Activated B cell treated with CpG ODN at 0.5 μM for 24 hours (primary cell): ENCODE measurements at regions of chr5 and their contacts with region 1.

Region 1: DNA sequence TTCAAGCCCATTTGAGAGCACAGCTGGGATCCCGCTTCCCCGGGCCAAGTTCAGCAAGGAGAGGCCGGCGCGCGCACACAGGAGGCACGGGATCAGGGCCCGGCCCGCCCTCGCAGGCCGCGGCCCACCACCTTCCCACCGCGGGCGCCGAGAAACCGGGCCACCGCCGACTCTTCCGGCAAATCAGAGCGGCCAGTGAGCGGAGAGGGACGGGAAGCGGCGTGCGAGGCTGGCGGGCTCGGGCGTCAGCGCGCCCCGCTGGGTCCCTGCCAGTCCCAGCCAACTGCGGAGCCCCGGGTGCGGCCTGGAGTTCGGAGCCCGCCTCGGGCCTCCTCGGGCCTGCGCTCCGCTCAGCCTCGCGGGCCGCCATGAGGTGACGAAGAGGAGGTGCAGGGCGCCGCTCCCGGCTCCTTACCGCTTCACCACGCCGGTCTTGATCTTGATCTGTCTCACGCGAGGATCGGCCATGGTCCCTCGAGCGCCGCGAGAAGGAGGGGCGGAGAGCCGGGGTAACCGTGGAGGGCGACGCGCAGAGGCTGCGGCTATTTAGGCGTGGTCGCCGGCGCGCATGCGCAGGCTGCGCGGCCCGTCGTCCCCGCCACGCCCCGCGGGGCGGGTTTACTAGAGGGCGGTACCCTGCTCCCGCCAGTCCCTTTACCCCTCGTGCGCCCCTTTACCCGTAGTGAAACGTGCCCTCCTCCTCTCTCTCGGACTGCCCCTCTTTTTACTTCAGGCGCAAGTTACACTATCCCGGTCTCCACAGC is at the start of gene TBCA:
- DNase-seq: peak; percentile 96
- ATAC-seq: peak; percentile 89
- H3K4me3 Mint-ChIP-seq: peak within 1 kb of the TSS; percentile 95
- H3K27ac Mint-ChIP-seq: peak within 1 kb of the TSS; percentile 93
- H3K4me1 Mint-ChIP-seq: peaks cover 44% of the 10 kb centered on the region
- H3K27me3 Mint-ChIP-seq: no peaks in the 10 kb centered on the region
- CTCF ChIP-seq: no peak
- total RNA-seq, gene TBCA: 113 and 128 TPM in 2 replicates

Region 2: GRCh38 chr5:77030097-77031071 is 745.6 kb before region 1 on chr5 and contains the start of gene AGGF1:
- CTCF ChIA-PET with region 1: no interaction called
- POLR2A ChIA-PET with region 1: no interaction called
- intact Hi-C with region 1: loop called (anchors 10 kb)
- DNase-seq: peak; percentile 79
- ATAC-seq: peak; percentile 99
- H3K4me3 Mint-ChIP-seq: peak within 1 kb of the TSS; percentile 99
- H3K27ac Mint-ChIP-seq: peak within 1 kb of the TSS; percentile 89
- H3K4me1 Mint-ChIP-seq: peaks cover 28% of the 10 kb centered on the region
- H3K27me3 Mint-ChIP-seq: peaks cover 8% of the 10 kb centered on the region
- CTCF ChIP-seq: no peak
- total RNA-seq, gene AGGF1: 22.2 and 26.5 TPM in 2 replicates

Region 3: GRCh38 chr5:77550406-77550805 is 225.6 kb before region 1 on chr5:
- CTCF ChIA-PET with region 1: no interaction called
- POLR2A ChIA-PET with region 1: no interaction called
- intact Hi-C with region 1: no loop called
- DNase-seq: no peak
- ATAC-seq: no peak
- H3K4me3 Mint-ChIP-seq: no peak overlapping the region
- H3K27ac Mint-ChIP-seq: no peak overlapping the region
- H3K4me1 Mint-ChIP-seq: no peaks in the 10 kb centered on the region
- H3K27me3 Mint-ChIP-seq: peaks cover 5% of the 10 kb centered on the region
- CTCF ChIP-seq: no peak

Region 4: DNA sequence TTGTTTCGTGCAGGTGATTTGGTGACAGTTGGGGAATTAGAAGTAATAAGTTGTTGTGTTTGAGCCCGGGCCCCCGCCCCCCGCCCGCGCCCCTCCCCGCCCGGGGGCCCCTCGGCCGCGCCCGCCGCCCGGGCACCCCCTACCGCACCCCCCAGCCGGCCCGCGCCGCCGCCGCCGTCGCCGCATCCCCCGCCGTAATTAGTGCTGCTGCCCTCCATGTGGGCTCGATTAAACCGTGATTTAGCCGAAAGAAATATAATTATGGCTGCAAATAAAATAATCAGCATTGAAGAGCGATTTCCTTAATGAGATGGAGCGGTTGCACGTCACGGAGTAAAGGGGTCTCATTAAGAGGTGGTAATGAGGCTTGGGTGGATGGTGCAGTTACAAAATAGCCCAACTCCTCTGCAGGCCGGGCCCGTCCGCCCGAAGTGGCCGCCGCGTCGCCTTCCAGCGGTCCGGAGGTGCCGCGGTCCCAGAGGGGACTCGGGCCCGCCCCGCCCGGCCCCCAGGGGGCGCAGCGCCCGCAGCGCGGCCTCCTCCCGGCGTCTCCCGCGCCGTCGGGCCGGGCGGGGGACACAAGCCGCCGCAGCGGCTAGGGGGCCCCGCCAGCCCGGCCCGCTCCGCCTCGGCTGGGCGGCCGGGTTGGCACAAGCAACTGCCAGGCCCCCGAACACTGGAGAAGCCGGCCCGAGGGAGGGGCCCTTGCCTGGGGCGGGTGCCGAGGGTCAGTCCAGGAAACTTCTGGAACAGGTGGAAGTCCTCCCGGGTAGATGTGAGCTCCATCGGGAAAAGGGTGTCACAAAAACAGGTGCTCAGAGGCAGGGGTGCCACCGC is 130.6 kb before region 1 on chr5:
- CTCF ChIA-PET with region 1: no interaction called
- POLR2A ChIA-PET with region 1: no interaction called
- intact Hi-C with region 1: loop called (anchors 2 kb)
- DNase-seq: peak; percentile 66
- ATAC-seq: peak; percentile 83
- H3K4me3 Mint-ChIP-seq: peak overlapping the region; percentile 75
- H3K27ac Mint-ChIP-seq: no peak overlapping the region
- H3K4me1 Mint-ChIP-seq: peaks cover 15% of the 10 kb centered on the region
- H3K27me3 Mint-ChIP-seq: peaks cover 65% of the 10 kb centered on the region
- CTCF ChIP-seq: no peak

Region 5: DNA sequence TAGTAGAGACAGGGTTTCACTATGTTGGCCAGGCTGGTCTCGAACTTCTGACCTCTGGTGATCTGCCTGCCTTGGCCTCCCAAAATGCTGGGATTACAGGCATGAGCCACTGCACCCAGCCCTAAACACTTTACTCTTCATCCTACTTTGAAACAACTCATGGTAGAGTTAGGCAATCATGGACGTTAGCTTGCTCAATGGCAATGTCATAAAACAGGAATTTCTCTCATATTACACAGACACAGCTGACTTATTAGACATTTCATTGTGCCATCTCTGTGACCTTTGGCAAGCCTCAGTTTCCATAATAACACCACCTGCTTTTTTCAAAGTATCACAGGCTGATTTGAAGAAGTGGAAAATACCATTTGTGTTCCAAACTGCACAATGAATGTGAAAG is 96.2 kb before region 1 on chr5:
- CTCF ChIA-PET with region 1: no interaction called
- POLR2A ChIA-PET with region 1: no interaction called
- intact Hi-C with region 1: no loop called
- DNase-seq: no peak
- ATAC-seq: no peak
- H3K4me3 Mint-ChIP-seq: no peak overlapping the region
- H3K27ac Mint-ChIP-seq: no peak overlapping the region
- H3K4me1 Mint-ChIP-seq: no peaks in the 10 kb centered on the region
- H3K27me3 Mint-ChIP-seq: peaks cover 7% of the 10 kb centered on the region
- CTCF ChIP-seq: no peak

Region 6: DNA sequence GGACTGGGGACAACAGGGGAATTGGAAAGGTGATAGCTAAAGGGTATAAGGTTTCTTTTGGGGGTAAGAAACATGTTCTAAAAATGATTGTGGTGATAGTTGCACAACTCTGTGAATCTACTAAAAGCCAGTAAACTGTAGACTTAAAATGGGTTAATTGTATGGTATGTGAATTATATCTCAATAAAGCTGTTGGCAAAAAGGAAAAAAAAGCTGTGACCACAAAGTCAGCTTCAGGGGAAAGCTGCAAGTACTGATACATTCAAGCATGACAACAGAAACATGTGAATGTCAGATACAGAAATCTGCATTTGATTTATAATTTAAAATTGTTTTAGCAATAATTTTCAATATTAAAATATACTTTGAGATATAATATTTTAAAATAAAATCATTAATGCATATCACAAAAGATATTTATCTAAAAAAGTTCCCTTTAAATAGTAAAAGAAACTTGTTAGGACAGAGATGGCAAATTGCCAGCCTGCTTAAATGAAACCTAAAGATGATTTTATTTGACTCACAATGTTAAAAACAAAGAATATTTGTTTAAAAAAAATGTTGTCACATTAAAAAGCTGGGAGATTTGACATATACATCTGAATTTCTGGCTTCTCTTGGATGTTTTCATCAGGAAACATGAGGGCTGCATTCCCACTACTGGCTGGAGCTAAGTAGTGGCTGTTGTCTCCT is 65.8 kb before region 1 on chr5:
- CTCF ChIA-PET with region 1: no interaction called
- POLR2A ChIA-PET with region 1: no interaction called
- intact Hi-C with region 1: no loop called
- DNase-seq: no peak
- ATAC-seq: no peak
- H3K4me3 Mint-ChIP-seq: no peak overlapping the region
- H3K27ac Mint-ChIP-seq: no peak overlapping the region
- H3K4me1 Mint-ChIP-seq: peaks cover 13% of the 10 kb centered on the region
- H3K27me3 Mint-ChIP-seq: no peaks in the 10 kb centered on the region
- CTCF ChIP-seq: no peak

Region 7: DNA sequence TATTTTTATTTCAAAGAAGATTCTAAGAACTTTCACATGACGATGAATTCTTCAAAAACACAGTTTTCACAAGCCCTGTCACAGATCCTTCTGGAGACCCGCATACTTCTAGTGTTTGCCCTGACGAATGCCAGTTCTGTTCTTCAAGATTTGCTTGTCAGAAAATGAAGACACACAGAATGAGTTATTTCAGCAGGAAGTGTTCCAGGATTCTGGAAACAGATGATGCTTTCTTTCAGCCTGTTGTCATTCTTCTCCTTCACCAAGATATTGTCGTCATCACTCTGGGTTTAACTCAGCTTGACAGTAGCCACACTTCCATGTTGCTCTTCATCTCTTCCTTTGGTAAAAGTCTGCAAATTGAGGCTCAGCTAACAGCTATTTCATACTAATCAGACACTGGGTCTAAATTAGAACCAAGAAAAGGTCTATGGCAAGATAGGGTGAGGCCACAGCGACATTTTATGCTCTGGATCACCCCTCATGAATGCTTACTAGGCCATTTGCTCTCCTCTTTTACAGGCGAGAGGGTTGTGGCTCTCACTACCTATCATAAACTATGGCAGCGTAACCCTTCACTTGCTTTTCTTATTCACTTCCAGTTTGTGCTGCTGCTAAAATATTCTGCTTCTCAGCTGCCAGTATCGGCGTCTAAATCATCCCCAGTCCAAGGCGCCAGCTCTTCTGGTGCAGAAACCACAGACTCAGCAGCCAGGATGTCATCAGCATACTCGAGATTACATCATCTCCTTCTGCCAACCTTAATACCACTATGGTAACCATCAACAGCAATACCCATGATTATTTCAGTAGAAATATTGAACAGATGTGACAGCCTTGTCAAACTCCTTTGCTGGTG is 159.8 kb after region 1 on chr5:
- CTCF ChIA-PET with region 1: no interaction called
- POLR2A ChIA-PET with region 1: no interaction called
- intact Hi-C with region 1: loop called (anchors 2 kb)
- DNase-seq: no peak
- ATAC-seq: peak; percentile 83
- H3K4me3 Mint-ChIP-seq: peak overlapping the region; percentile 1
- H3K27ac Mint-ChIP-seq: peak overlapping the region; percentile 65
- H3K4me1 Mint-ChIP-seq: peaks cover 28% of the 10 kb centered on the region
- H3K27me3 Mint-ChIP-seq: peaks cover 4% of the 10 kb centered on the region
- CTCF ChIP-seq: no peak

Region 8: DNA sequence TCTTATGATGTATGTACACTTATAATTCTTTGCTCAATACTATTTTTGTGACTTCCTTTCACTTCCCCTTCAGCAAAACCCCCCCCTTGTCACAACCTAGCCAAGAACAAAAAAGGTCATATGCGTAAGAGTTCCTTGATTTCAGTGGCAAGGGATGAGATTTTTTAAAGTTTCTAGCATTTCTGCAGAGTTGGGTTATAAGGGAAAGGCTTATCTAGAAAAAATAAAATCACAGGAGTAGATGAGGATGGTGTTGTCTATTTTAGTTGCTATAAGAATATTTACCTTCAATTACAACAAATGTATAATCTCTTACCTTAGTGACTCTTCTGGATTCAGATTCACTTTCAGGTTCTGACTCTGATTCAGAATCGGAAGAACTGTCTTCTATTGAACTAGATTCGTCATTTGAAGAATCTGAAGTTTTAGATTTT is 333.9 kb after region 1 on chr5:
- CTCF ChIA-PET with region 1: no interaction called
- POLR2A ChIA-PET with region 1: no interaction called
- intact Hi-C with region 1: loop called (anchors 5 kb)
- DNase-seq: no peak
- ATAC-seq: peak; percentile 76
- H3K4me3 Mint-ChIP-seq: peak overlapping the region; percentile 75
- H3K27ac Mint-ChIP-seq: peak overlapping the region; percentile 87
- H3K4me1 Mint-ChIP-seq: peaks cover 69% of the 10 kb centered on the region
- H3K27me3 Mint-ChIP-seq: no peaks in the 10 kb centered on the region
- CTCF ChIP-seq: no peak

Region 9: GRCh38 chr5:78359831-78360673 is 584.1 kb after region 1 on chr5 and contains the start of gene SCAMP1:
- CTCF ChIA-PET with region 1: no interaction called
- POLR2A ChIA-PET with region 1: no interaction called
- intact Hi-C with region 1: loop called (anchors 1 kb)
- DNase-seq: peak; percentile 99
- ATAC-seq: peak; percentile 87
- H3K4me3 Mint-ChIP-seq: peak within 1 kb of the TSS; percentile 95
- H3K27ac Mint-ChIP-seq: peak within 1 kb of the TSS; percentile 96
- H3K4me1 Mint-ChIP-seq: peaks cover 33% of the 10 kb centered on the region
- H3K27me3 Mint-ChIP-seq: no peaks in the 10 kb centered on the region
- CTCF ChIP-seq: no peak
- total RNA-seq, gene SCAMP1: 8.5 and 9.6 TPM in 2 replicates

Region 10: DNA sequence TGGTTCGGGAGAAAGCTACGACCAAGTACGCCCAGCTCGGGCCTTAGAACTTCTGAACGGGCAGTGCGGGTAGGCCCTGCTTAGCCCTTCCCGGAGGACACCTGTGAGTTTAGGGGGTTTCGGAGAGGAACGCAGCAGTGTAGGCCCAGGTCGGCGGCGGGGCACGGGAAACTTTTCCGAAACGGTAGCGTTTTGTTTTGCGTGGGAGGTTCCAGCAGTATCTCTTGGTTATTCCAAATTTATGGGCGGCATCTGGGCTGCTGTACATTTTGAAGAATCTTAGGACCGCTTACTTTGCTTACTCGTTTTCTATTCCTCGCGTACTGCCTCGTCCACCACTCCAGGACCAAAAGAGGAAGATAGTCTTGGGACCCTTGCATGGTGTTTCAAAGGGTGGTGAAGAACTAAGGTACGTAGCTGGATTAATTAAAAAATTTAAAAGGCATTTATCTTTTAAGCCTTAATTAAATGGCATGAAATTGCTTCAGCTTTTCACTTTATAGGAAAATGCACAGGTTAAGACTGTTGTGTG is 1836.8 kb after region 1 on chr5:
- CTCF ChIA-PET with region 1: no interaction called
- POLR2A ChIA-PET with region 1: no interaction called
- intact Hi-C with region 1: loop called (anchors 1 kb)
- DNase-seq: no peak
- ATAC-seq: peak; percentile 16
- H3K4me3 Mint-ChIP-seq: peak overlapping the region; percentile 99
- H3K27ac Mint-ChIP-seq: peak overlapping the region; percentile 98
- H3K4me1 Mint-ChIP-seq: peaks cover 34% of the 10 kb centered on the region
- H3K27me3 Mint-ChIP-seq: peaks cover 2% of the 10 kb centered on the region
- CTCF ChIP-seq: no peak